Activated T-helper 1 cell treated with anti-CD3 and anti-CD28 coated beads, Interleukin-12 subunit alpha, Interleukin-12 subunit beta, Interleukin-2, Interleukin-4 antibody, amounts not matched to agents 30 ng/mL and 10 ng/mL and 1 ng/mL, durations not matched to agents 14 hours and 24 hours and 36 hours (primary cell): ENCODE measurements at regions of chr1 and their contacts with region 1.

Region 1: GRCh38 chr1:12161662-12162458 is 4.9 kb upstream of the TNFRSF1B start:
- DNase-seq: peak; percentile 79
- H3K4me3 Mint-ChIP-seq: peak overlapping the region; percentile 69
- H3K27ac Mint-ChIP-seq: peak overlapping the region; percentile 95
- H3K4me1 Mint-ChIP-seq: peaks cover 82% of the 10 kb centered on the region
- H3K27me3 Mint-ChIP-seq: no peaks in the 10 kb centered on the region

Region 2: GRCh38 chr1:12067900-12068821 is 93.7 kb before region 1 on chr1:
- intact Hi-C with region 1: loop called (anchors 1 kb)
- DNase-seq: peak; percentile 47
- H3K4me3 Mint-ChIP-seq: peak overlapping the region; percentile 73
- H3K27ac Mint-ChIP-seq: peak overlapping the region; percentile 94
- H3K4me1 Mint-ChIP-seq: peaks cover 68% of the 10 kb centered on the region
- H3K27me3 Mint-ChIP-seq: peaks cover 2% of the 10 kb centered on the region

Region 3: GRCh38 chr1:12148958-12149790 is 12.7 kb before region 1 on chr1:
- intact Hi-C with region 1: loop called (anchors 1 kb)
- DNase-seq: no peak
- H3K4me3 Mint-ChIP-seq: peak overlapping the region; percentile 31
- H3K27ac Mint-ChIP-seq: peak overlapping the region; percentile 97
- H3K4me1 Mint-ChIP-seq: peaks cover 88% of the 10 kb centered on the region
- H3K27me3 Mint-ChIP-seq: no peaks in the 10 kb centered on the region

Region 4: DNA sequence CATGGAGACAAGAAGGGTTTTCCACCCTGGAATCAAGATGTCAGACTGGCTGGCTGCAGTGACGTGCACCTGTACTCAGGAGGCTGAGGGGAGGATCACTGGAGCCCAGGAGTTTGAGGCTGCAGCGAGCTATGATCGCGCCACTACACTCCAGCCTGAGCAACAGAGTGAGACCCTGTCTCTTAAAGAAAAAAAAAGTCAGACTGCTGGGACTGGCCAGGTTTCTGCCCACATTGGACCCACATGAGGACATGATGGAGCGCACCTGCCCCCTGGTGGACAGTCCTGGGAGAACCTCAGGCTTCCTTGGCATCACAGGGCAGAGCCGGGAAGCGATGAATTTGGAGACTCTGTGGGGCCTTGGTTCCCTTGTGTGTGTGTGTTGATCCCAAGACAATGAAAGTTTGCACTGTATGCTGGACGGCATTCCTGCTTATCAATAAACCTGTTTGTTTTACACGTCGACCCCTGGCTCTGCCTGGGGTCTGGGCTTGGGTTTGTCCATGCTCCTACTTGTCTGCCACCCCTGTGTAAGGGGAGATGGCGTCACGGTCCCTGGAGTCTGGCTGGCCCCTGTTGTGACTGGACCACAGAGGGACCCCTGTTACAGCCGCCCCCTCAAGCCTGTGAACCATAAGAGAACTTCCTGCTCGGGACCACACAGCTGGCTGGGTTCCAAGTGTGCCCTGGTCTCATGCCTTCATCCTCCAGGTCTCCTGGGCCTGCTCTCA is 47.1 kb after region 1 on chr1:
- intact Hi-C with region 1: loop called (anchors 1 kb)
- DNase-seq: peak; percentile 65
- H3K4me3 Mint-ChIP-seq: no peak overlapping the region
- H3K27ac Mint-ChIP-seq: peak overlapping the region; percentile 79
- H3K4me1 Mint-ChIP-seq: peaks cover 40% of the 10 kb centered on the region
- H3K27me3 Mint-ChIP-seq: peaks cover 3% of the 10 kb centered on the region

Region 5: GRCh38 chr1:12518931-12519692 is 357.3 kb after region 1 on chr1:
- intact Hi-C with region 1: loop called (anchors 10 kb)
- DNase-seq: peak; percentile 21
- H3K4me3 Mint-ChIP-seq: no peak overlapping the region
- H3K27ac Mint-ChIP-seq: peak overlapping the region; percentile 73
- H3K4me1 Mint-ChIP-seq: peaks cover 38% of the 10 kb centered on the region
- H3K27me3 Mint-ChIP-seq: no peaks in the 10 kb centered on the region